Activated CD4-positive, alpha-beta T cell treated with anti-CD3 and anti-CD28 coated beads for 36 hours (primary cell): ENCODE measurements at regions of chr10 and their contacts with region 1.

Region 1: GRCh38 chr10:119705434-119705831 is 20.4 kb upstream of the INPP5F start:
- DNase-seq: peak; percentile 51
- ATAC-seq: peak; percentile 28
- H3K4me3 Mint-ChIP-seq: peak overlapping the region; percentile 41
- H3K27ac Mint-ChIP-seq: peak overlapping the region; percentile 96
- H3K4me1 Mint-ChIP-seq: peaks cover 82% of the 10 kb centered on the region
- H3K27me3 Mint-ChIP-seq: no peaks in the 10 kb centered on the region

Region 2: DNA sequence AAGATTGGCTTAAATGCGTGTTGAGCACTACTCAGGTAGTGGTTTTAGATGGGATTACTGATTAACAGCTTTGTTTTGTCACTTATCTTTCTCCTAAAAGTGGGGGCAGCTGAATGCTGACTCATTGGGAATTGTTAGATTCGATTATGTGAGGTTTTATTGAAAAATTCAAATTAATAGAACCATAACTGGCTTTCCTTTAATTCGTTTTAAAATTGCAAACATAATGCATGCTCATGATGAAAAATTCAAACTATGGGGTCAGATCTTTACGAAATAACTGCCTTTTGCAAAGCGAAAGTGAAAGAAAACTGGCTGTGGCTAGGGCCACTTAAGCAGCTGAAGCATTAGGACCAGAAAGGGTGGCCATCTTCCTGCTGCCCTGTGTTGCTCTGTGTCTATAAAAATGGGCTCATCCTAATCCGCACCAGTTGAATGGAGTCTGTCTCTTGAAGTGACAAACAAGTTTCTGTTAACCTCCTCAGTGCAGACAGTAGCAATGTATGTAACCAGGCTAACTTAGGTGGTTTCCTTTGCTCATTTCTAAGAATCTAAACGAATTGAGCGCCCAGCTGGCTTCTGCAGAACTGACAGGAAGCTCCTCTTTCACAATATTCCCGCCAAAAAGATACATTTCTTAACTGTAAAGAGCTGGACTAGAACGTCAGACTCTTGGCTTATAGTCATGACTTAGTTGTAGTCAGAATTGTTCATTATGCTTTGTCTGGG is 573.8 kb before region 1 on chr10:
- CTCF ChIA-PET with region 1: no interaction called
- POLR2A ChIA-PET with region 1: no interaction called
- intact Hi-C with region 1: loop called in 1 of 2 experiments (anchors 5 kb)
- DNase-seq: peak; percentile 75
- ATAC-seq: peak; percentile 84
- H3K4me3 Mint-ChIP-seq: peak overlapping the region; percentile 78
- H3K27ac Mint-ChIP-seq: peak overlapping the region; percentile 99
- H3K4me1 Mint-ChIP-seq: peaks cover 50% of the 10 kb centered on the region
- H3K27me3 Mint-ChIP-seq: no peaks in the 10 kb centered on the region

Region 3: DNA sequence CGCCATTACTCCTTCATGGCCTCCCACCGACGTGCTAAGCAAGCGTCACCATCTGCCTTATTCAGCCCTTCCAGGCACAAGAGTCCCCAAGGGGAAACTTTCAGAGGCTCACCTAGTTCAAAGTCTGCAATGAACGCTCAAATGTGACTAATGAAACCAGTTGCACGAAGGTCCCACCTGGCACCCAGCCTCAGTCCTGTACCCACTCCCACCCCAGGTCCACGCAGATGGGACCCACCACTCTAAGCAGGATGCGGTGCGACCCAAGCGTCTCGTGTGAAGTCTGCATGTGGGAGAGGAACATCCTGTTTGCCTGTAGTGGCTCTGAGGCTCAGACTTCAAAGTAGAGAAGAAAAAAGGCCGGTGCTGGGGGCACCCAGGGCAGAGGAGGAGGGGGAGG is 203.2 kb before region 1 on chr10:
- CTCF ChIA-PET with region 1: no interaction called
- POLR2A ChIA-PET with region 1: no interaction called
- intact Hi-C with region 1: loop called in 1 of 2 experiments (anchors 5 kb)
- DNase-seq: peak; percentile 87
- ATAC-seq: peak; percentile 78
- H3K4me3 Mint-ChIP-seq: peak overlapping the region; percentile 56
- H3K27ac Mint-ChIP-seq: peak overlapping the region; percentile 98
- H3K4me1 Mint-ChIP-seq: peaks cover 96% of the 10 kb centered on the region
- H3K27me3 Mint-ChIP-seq: no peaks in the 10 kb centered on the region

Region 4: GRCh38 chr10:119725828-119726675 is 20.6 kb after region 1 on chr10 and contains the start of gene INPP5F:
- CTCF ChIA-PET with region 1: interaction called, 19 read pairs
- POLR2A ChIA-PET with region 1: interaction called, 12 read pairs
- intact Hi-C with region 1: loop called (anchors 1 kb)
- DNase-seq: peak; percentile 100
- ATAC-seq: peak; percentile 95
- H3K4me3 Mint-ChIP-seq: peak within 1 kb of the TSS; percentile 86
- H3K27ac Mint-ChIP-seq: peak within 1 kb of the TSS; percentile 73
- H3K4me1 Mint-ChIP-seq: peaks cover 47% of the 10 kb centered on the region
- H3K27me3 Mint-ChIP-seq: no peaks in the 10 kb centered on the region
- total RNA-seq, gene INPP5F: 10.9 to 12.6 TPM

Region 5: DNA sequence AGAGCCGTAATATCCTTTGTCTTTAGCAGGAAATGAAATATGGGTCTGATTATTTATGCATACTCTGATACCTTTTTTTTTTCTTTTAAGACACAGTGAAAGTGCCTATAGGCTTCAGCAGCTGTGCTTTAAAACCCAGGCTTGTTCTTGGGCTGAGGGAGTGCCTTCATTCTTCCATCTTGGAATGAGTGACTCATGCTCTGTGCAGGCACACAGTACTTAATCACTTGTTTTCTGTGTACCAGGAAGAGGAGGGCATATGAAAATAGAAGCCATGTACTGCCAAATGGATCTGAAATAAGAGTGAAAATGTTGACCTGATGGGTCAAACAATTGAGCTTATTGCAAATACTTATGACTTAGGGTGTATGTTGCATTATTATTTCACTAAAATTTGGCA is 32.4 kb after region 1 on chr10:
- CTCF ChIA-PET with region 1: interaction called, 4 read pairs
- POLR2A ChIA-PET with region 1: interaction called, 3 read pairs
- intact Hi-C with region 1: loop called in 1 of 2 experiments (anchors 5 kb)
- DNase-seq: peak; percentile 25
- ATAC-seq: peak; percentile 82
- H3K4me3 Mint-ChIP-seq: no peak overlapping the region
- H3K27ac Mint-ChIP-seq: no peak overlapping the region
- H3K4me1 Mint-ChIP-seq: peaks cover 46% of the 10 kb centered on the region
- H3K27me3 Mint-ChIP-seq: no peaks in the 10 kb centered on the region